CD8-positive, alpha-beta memory T cell (primary cell): ENCODE measurements at regions of chr6 and their contacts with region 1.

Region 1: GRCh38 chr6:132798869-132799538 is 567 bp upstream of the SLC18B1 start:
- DNase-seq: peak; percentile 57 to 80 (median 63)
- H3K4me3 ChIP-seq: peak overlapping the region; percentile 73
- H3K4me3 Mint-ChIP-seq: no peak overlapping the region
- H3K27ac ChIP-seq: no peak overlapping the region
- H3K27ac Mint-ChIP-seq: no peak overlapping the region
- H3K4me1 ChIP-seq: no peaks in the 10 kb centered on the region
- H3K4me1 Mint-ChIP-seq: peaks cover 23 to 42% (median 41%) of the 10 kb centered on the region in 3 donors
- H3K27me3 ChIP-seq: no peaks in the 10 kb centered on the region
- H3K27me3 Mint-ChIP-seq: no peaks in the 10 kb centered on the region

Region 2: GRCh38 chr6:132669690-132670291 is 129.2 kb before region 1 on chr6:
- CTCF ChIA-PET with region 1: interaction called, 13 read pairs
- POLR2A ChIA-PET with region 1: no interaction called
- DNase-seq: peak in 2 of 5 donors; percentile 24 to 30
- H3K4me3 ChIP-seq: no peak overlapping the region
- H3K4me3 Mint-ChIP-seq: peak overlapping the region in 1 of 7 donors; percentile 54
- H3K27ac ChIP-seq: no peak overlapping the region
- H3K27ac Mint-ChIP-seq: peak overlapping the region in 2 of 8 donors; percentile 25 to 68
- H3K4me1 ChIP-seq: no peaks in the 10 kb centered on the region
- H3K4me1 Mint-ChIP-seq: peaks cover 3 to 4% (median 3%) of the 10 kb centered on the region in 3 donors
- H3K27me3 ChIP-seq: no peaks in the 10 kb centered on the region
- H3K27me3 Mint-ChIP-seq: peaks cover 0 to 5% of the 10 kb centered on the region in 2 donors

Region 3: DNA sequence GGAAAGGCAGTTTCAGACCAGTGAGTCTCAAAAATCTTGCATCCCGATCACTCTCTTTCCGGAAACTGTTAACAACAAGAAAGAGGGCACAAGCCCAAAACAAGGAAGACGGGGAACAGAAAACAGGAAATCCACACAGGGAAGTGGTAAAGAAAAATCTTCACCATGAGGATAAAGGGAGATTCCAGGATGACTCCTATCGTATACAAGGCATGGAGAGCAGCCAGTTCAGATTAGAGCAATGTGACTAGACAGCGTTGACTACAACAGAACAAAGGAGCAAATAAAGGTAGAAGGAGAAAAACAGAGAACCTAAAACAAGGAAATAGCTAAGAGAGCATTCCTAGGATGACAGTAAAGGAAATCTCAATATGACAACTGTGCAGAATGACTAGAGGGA is 111.7 kb before region 1 on chr6:
- CTCF ChIA-PET with region 1: no interaction called
- POLR2A ChIA-PET with region 1: no interaction called
- DNase-seq: no peak
- H3K4me3 ChIP-seq: no peak overlapping the region
- H3K4me3 Mint-ChIP-seq: no peak overlapping the region
- H3K27ac ChIP-seq: no peak overlapping the region
- H3K27ac Mint-ChIP-seq: no peak overlapping the region
- H3K4me1 ChIP-seq: no peaks in the 10 kb centered on the region
- H3K4me1 Mint-ChIP-seq: no peaks in the 10 kb centered on the region
- H3K27me3 ChIP-seq: no peaks in the 10 kb centered on the region
- H3K27me3 Mint-ChIP-seq: peaks cover 5 to 48% of the 10 kb centered on the region in 2 donors

Region 4: GRCh38 chr6:132768051-132768517 is 30.9 kb before region 1 on chr6:
- CTCF ChIA-PET with region 1: interaction called, 19 read pairs
- POLR2A ChIA-PET with region 1: interaction called, 7 read pairs
- DNase-seq: peak in 3 of 5 donors; percentile 2 to 49 (median 8)
- H3K4me3 ChIP-seq: no peak overlapping the region
- H3K4me3 Mint-ChIP-seq: peak overlapping the region in 2 of 7 donors; percentile 52 to 64
- H3K27ac ChIP-seq: no peak overlapping the region
- H3K27ac Mint-ChIP-seq: no peak overlapping the region
- H3K4me1 ChIP-seq: peaks cover 8% of the 10 kb centered on the region
- H3K4me1 Mint-ChIP-seq: peaks cover 12 to 19% (median 15%) of the 10 kb centered on the region in 3 donors
- H3K27me3 ChIP-seq: no peaks in the 10 kb centered on the region
- H3K27me3 Mint-ChIP-seq: no peaks in the 10 kb centered on the region

Region 5: DNA sequence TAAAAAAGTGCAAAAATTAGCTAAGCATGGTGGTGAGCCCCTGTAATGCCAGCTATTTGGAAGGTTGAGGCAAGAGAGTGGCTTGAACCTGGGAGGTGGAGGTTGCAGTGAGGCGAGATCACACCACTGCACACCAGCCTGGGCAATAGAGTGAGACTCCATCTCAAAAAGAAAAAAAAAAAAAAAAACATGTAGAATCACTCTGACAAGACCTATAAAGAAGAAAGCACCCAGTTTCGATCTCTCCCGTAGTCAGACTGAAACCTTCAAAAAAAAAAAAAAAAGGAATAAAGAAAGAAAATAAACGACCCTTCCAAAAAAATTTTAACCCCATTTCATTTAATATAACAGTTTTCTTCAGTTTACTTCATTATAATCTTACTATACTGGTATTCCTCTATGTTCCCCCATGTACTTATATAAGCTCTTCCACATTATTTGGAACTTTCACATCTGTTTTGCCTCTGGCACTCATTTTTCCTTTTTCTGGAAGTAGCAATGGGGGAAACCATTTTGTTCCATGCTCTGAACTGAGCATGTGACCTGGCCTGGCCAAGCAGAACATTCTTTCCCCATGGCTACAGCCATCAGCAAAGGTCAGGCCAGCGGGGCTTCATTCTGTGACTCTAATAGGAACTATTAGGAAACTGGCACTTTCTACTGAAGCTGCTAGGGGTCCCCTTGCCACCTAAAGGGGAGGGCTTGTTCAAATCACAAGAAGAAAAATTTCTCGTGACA is 10.2 kb before region 1 on chr6:
- CTCF ChIA-PET with region 1: interaction called, 11 read pairs
- POLR2A ChIA-PET with region 1: interaction called, 7 read pairs
- DNase-seq: no peak
- H3K4me3 ChIP-seq: no peak overlapping the region
- H3K4me3 Mint-ChIP-seq: no peak overlapping the region
- H3K27ac ChIP-seq: no peak overlapping the region
- H3K27ac Mint-ChIP-seq: peak overlapping the region in 2 of 8 donors; percentile 17 to 81
- H3K4me1 ChIP-seq: no peaks in the 10 kb centered on the region
- H3K4me1 Mint-ChIP-seq: peaks cover 15 to 25% (median 17%) of the 10 kb centered on the region in 3 donors
- H3K27me3 ChIP-seq: no peaks in the 10 kb centered on the region
- H3K27me3 Mint-ChIP-seq: no peaks in the 10 kb centered on the region

Region 6: DNA sequence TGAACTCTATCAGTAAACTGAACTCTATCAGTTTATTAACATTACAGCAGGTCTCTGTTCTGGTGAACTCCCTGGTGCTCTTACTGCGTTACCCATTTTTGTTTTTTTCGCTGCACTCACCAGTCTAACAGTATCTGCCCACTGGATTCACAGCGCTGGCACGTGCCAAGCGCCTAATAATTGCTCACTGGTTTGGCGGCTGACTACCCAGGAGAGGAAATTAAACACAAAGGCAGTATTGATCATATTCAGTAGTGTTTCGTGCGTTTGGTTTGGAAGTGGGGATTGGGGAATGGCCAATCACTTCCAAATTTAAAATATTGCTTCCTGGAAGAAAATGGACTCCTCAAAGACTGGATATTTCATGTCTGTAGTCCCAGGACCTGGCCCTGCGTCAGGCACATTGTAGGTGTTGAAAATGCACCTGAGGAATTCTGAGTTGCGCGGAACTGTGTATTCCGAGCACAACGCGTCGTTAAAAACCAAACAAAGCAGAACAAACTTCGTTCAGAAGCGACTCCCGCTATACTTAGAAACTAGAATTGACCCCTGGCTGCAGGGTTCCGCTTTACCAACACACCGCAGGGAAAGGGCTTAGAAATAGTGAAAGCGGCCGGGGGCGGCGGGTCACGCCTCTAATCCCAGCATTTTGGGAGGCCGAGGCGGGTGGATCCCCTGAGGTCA is 14.3 kb after region 1 on chr6:
- CTCF ChIA-PET with region 1: interaction called, 67 read pairs
- POLR2A ChIA-PET with region 1: interaction called, 64 read pairs
- DNase-seq: peak; percentile 14 to 60 (median 56)
- H3K4me3 ChIP-seq: peak overlapping the region; percentile 61
- H3K4me3 Mint-ChIP-seq: peak overlapping the region; percentile 91 to 99 (median 98)
- H3K27ac ChIP-seq: peak overlapping the region; percentile 77
- H3K27ac Mint-ChIP-seq: peak overlapping the region; percentile 94 to 99 (median 98)
- H3K4me1 ChIP-seq: peaks cover 31% of the 10 kb centered on the region
- H3K4me1 Mint-ChIP-seq: peaks cover 44 to 58% (median 47%) of the 10 kb centered on the region in 3 donors
- H3K27me3 ChIP-seq: no peaks in the 10 kb centered on the region
- H3K27me3 Mint-ChIP-seq: peaks cover 0 to 7% of the 10 kb centered on the region in 2 donors

Region 7: DNA sequence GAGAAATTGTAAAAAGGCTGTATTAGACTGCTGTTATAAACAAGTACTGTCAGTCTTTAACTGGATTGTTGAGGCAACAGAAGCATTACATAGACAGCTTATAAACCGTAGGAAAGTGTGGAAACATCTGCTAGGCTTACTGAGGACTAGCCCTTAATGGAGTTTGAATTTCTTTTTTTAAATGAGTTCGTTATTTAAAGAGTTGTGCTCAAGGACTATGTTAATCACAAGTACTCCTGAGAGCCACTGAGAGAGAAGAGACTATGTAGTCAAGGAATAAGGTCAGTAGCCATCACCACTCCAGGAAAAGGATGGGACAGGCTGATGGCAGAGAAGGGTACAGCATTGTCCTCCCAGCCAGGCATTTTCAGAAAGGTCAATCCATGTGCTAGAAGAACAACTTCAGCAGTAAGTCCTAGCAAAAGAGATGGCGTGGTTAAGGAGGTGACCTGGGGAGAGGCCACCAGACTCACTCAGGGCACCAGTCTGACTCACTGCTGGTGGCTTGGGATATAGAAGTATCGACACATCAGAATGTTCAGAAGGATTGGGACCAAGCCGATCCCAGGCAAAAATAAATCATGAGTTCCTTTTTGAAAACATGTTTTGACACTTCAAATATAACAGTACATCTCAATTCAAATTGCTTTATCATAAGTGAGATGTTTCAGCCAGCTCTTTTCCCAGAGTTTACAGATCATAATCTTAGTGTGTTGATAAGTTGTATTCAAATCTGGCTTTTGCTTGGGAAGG is 21.8 kb after region 1 on chr6:
- CTCF ChIA-PET with region 1: interaction called, 67 read pairs
- POLR2A ChIA-PET with region 1: interaction called, 64 read pairs
- DNase-seq: no peak
- H3K4me3 ChIP-seq: no peak overlapping the region
- H3K4me3 Mint-ChIP-seq: peak overlapping the region in 1 of 7 donors; percentile 32
- H3K27ac ChIP-seq: no peak overlapping the region
- H3K27ac Mint-ChIP-seq: peak overlapping the region; percentile 50 to 93 (median 76)
- H3K4me1 ChIP-seq: peaks cover 27% of the 10 kb centered on the region
- H3K4me1 Mint-ChIP-seq: peaks cover 40 to 64% (median 56%) of the 10 kb centered on the region in 3 donors
- H3K27me3 ChIP-seq: no peaks in the 10 kb centered on the region
- H3K27me3 Mint-ChIP-seq: no peaks in the 10 kb centered on the region

Region 8: DNA sequence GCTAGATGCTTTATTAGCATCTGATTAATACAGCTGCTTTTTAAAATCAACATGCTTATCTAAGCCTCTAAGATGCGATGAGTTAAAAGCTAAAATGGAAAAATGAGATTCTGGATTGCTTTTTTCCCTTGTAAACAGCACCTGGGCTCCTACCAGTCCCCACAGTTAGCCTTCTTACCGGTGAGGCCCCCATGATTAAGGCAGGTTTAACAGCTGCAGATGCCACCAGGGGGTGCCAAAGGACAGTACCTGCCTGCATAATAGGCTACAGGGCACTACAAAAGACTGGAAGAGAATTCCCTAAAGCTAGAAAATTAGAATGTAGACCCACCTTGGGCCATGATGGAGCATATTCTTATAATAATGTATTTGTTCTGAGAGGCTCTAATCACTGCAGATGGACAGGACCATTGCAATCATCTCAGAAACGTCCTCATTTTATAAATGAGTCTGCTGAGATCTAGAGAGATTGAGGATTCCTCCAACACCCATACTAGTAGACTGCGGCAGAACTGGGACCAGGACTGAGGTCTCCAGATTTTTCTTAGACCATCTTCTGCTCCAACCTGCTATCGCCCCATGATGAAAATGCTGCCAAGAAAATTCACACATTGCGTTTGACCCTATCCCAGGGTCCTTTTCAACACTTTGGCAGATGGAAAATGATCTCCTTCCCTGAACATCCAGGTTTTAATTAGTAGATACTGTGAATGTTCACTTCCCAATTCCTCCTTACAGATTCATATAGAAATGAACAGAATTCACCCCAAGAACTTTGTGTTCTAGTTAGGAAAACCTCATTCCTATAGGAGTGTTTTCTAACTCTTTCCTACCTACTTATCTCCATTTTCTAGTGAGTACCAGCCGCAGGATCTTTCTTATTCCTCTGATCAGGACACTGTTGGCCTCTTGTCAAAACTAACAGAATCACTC is 164.2 kb after region 1 on chr6:
- CTCF ChIA-PET with region 1: no interaction called
- POLR2A ChIA-PET with region 1: no interaction called
- DNase-seq: peak; percentile 10 to 56 (median 21)
- H3K4me3 ChIP-seq: no peak overlapping the region
- H3K4me3 Mint-ChIP-seq: no peak overlapping the region
- H3K27ac ChIP-seq: no peak overlapping the region
- H3K27ac Mint-ChIP-seq: no peak overlapping the region
- H3K4me1 ChIP-seq: no peaks in the 10 kb centered on the region
- H3K4me1 Mint-ChIP-seq: no peaks in the 10 kb centered on the region
- H3K27me3 ChIP-seq: peaks cover 5% of the 10 kb centered on the region
- H3K27me3 Mint-ChIP-seq: peaks cover 17 to 40% of the 10 kb centered on the region in 2 donors